Left cardiac atrium (tissue), 4 donors: ENCODE measurements at regions of chr2 and their contacts with region 1.

Region 1: GRCh38 chr2:10434886-10435819 is 13.0 kb downstream of the ODC1 start:
- DNase-seq: peak; percentile 78
- ATAC-seq: peak; percentile 80 to 86

Region 2: DNA sequence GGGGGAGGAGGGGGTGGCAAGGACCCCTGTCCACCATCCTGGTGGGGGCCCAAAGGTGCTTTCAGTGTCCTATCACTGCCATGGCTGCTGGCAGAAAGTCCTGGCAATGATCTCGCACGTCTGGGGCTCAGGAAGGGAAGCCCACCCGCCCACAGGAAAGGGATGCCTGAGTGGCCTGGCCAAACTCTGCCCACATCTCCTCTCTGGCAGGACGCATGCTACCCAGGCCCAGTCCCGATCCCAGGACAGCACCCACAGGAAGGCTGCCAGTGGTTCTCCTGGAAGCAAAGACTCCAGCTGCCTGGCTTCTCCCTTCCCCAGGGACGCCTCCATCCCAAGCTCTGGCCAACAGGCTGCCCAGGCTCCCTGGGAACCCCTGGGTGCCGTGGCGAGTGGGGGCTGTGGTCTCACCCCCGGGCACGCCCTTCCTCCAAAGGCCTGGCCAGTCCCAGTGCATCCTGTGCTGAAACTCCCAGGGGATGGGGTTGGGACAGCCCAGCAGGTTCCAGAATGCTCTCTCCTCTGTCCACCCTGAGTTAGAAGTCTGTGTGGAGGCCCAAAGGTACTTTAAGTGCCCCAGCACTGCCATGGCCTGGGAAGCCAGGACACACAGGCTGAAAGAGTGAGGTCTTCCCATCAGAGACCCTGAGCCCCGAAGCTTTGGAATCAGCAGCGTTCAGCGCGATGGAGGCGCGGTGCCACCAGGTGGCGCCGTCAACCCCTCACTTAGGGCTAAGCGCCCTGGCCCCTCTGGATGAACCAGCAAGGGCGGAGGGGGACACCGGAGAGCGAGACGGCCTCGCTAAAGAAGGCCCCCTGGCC is 621.6 kb before region 1 on chr2:
- intact Hi-C with region 1: loop called in 1 of 2 experiments (anchors 10 kb)
- DNase-seq: peak; percentile 78
- ATAC-seq: peak; percentile 84 to 87

Region 3: DNA sequence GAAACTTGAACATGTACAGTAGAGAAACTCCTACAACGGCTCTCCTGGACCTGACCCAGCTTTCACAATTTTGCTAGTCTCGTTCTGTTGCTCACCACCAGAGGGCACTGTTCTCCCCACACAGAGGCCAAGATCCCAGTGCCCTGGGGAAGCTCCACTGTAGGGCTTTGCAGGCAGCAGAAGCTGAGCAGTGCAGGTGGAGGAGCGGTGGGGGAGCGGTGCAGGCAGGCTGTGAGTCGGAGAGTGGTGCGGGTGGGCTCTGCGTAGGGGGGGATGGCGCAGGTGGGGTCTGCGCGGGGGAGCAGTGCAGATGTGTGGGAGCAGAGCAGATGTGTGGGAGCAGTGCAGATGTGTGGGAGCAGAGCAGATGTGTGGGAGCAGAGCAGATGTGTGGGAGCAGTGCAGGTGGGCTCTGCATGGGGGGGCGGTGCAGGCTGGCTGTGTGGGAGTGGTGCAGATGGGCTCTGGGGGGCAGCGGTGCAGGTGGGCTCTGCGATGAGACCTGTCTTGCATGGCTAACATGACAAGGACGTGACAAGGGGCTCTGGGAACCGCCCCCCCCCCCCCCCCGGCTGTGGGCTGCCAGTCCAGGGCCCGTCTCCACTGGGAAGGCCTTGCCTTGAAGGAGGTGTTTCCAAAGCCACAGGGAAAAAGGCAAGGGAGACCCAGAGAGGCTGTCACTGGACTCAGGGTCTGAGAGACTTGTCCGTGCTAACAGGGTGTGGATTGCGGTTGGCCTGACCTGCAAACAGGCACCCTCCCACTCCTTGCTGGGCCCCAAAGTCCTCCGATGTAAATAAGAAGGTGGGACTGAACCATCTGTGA is 362.3 kb before region 1 on chr2:
- intact Hi-C with region 1: loop called (anchors 5 kb)
- DNase-seq: peak; percentile 84
- ATAC-seq: peak; percentile 94 to 95

Region 4: GRCh38 chr2:10079234-10079869 is 355.8 kb before region 1 on chr2:
- intact Hi-C with region 1: loop called (anchors 5 kb)
- DNase-seq: peak; percentile 59
- ATAC-seq: peak; percentile 66 to 82

Region 5: GRCh38 chr2:10122386-10123280 is 312.5 kb before region 1 on chr2 and contains the start of gene RRM2:
- intact Hi-C with region 1: loop called (anchors 5 kb)
- DNase-seq: peak; percentile 93
- ATAC-seq: peak; percentile 89 to 96
- total RNA-seq, gene RRM2: 1.0 to 6.1 TPM

Region 6: DNA sequence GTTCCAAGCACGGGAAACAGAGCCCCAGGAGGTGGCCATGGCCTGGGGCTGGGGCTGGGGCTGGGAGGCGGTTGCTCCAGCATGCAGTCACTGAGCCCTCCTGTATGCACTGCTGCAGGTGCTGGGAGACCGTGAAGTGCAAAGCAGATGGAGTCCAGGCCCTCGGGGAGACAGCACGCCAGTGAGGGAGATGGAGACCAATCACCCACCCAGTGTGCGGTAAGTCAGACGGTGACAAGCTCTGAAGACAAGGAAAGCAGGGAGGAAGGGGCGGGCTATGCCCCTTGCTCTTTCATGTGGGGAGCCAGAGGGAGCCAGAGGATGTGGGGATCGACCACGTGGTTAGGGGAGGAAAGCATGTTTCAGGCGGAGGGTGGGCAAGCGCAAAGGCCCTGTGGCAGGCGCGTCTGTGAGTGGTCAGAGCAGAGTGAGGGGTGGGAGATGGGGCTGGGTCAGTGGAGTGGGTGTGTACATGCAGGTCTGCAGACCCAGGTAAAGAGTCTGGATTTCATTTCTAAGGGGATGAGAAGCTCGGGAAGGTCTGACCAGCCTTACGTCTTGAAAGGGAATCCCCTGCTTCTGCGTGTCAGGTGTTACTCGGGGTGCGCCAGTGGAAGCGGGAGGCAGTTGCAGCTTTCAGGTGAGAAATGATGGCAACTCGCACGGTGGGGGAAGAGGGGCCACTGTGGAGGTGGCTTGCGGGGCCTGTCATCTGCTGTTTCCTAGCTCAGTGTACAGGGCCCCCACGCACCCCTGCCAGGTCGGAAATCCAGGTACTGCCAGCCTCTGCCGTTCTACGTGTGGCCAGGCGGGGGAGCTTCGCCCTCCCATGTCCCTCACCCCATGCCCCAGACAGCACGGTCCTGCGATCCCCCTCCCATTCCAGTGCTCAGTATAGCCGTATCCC is 293.2 kb before region 1 on chr2:
- intact Hi-C with region 1: loop called in 1 of 2 experiments (anchors 5 kb)
- DNase-seq: no peak
- ATAC-seq: peak; percentile 42 to 56

Region 7: DNA sequence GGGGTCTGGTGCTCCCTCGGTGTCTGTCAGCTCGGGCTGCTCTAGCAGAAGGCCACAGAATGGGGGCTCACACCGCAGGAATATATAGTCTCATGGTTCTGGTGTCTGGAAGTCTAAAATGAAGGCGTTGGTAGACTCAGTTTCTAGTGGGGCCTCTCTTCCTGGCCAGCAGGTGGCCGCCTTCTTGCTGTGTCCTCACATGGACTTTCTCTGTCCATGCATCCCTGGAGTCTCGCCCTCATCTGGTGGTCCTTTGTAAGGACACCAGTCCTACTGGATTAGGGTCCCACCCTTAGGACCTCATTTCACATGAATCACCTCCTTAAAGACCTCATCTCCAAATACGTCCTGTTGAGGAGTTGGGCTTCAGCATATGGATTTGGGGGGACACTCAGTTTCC is 246.9 kb before region 1 on chr2:
- intact Hi-C with region 1: no loop called
- DNase-seq: no peak
- ATAC-seq: no peak

Region 8: DNA sequence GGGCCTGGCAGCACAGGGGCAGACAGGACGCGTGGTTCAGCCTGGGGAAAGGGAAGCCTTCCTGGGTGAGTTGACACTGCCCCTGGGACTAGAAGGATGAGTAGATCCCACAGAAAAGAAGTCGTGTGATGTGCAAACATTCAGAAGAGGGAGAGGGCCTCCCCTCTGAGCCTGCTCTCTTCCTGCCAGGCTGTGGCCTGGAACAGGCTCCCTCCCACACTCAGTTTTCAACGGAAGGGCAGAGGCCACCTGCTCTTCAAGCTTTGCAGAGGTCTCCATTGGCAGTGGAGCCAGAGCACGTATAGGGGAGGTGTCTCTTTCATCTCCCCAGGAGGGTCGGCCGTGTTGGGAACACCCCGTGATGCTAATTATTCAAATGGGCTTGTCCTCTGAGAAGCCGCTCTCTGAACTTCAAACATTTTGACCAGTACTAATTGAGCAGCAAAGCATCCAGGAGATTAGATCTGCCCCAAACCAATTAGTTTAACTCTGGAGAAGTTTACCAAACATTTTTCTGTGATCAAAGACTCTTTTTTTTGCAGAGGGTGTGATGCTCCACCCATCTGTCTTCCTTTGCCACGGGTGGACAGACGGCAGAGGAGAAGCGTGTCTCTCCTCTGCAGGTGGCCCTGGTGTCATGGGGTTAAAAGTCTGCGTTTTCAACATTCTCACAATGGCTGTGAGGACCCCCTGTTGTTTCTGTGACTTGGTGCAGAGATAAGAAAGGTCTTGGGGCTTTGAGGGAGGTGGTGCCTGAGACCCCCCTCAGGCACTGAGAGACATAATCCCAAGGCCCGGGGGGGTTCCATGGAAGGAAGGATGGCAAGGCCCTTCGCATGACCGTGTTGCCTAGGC is 42.5 kb after region 1 on chr2:
- intact Hi-C with region 1: no loop called
- DNase-seq: no peak
- ATAC-seq: no peak